ENCODE measurements at regions of chr7 and their contacts with region 1.

Region 1: DNA sequence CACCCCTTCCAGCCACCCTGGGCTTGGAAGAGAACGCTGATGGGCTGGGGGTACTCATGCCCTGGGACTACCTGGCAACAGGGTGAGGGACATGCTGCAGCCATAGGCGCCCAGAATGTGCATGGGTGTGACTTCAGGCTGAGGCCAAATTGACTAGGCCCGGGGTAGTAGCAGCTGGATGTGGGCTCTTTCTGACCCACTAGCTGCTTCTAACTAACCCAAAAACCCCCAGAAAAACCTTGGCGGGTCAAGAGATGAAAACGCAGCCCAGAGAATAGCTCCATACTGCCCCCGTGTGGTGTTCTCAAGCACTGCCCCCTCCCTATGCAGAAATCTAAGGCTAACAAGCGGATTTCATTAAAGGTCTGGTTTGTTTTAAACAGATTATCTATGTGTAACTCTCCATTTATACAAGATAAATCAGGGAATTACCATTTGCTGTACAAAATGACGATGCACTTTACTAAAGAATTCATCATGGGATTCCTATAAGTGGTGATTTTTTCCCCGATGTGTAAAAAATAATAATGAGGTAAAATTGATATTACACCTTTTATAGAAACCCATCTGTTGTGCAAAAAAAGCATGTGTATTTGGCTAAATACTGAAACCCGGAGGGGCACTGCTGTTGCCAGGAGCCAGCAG is 4.2 kb downstream of the SMARCD3 start:
- DNase-seq: peak; percentile 57
- H3K4me3 ChIP-seq: no peak overlapping the region
- H3K27ac ChIP-seq: no peak overlapping the region
- H3K4me1 ChIP-seq: peaks cover 8% of the 10 kb centered on the region
- H3K27me3 ChIP-seq: peaks cover 32% of the 10 kb centered on the region
- CTCF ChIP-seq: peak; percentile 88

Region 2: DNA sequence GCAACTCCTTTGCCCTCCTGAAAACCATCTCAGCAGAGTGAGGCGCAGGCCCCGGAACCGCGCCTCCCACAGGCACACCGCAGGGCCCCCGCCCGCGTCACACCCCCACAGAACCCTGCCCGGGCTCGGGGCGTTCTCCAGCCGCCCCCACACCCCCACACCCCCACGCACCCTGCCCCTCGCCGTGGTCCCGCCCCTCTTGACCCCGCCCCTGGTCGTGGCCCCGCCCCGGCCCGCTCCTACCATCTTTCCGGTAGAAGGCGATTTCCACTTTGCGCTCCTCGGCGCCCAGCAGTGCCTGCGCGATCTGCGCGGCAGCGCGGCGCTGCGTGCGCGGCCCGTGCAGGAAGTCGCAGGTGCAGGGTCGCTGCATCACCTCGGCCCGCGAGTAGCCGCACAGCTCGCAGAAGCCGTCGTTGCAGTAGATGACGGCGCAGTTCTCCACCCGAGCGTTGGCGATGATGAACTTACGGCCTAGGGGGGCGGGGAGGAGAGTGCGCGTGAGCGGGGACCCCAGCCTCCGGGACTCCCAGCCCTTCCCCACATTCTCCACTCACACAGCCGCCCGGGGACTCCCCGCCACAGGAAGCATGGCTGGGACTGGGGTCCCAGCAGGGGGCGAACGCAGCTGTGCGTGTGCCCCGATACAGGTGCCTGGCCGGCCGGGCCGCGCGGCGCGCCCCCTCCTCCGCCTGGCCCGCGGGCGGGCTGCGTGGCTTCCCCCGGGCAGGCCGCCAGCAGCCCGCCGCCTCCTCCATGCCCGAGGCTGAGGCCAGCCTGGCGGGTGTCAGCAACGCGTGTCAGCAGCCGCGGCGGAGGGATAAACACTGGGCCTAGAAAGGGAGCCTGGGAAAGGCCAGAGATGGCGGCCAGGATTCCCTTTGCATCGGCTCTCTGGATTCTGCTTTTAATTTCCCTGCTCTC is 269.6 kb before region 1 on chr7:
- intact Hi-C with region 1: no loop called
- DNase-seq: peak; percentile 87
- H3K4me3 ChIP-seq: peak overlapping the region; percentile 42
- H3K27ac ChIP-seq: peak overlapping the region; percentile 62
- H3K4me1 ChIP-seq: no peaks in the 10 kb centered on the region
- H3K27me3 ChIP-seq: peaks cover 18% of the 10 kb centered on the region
- CTCF ChIP-seq: no peak

Region 3: DNA sequence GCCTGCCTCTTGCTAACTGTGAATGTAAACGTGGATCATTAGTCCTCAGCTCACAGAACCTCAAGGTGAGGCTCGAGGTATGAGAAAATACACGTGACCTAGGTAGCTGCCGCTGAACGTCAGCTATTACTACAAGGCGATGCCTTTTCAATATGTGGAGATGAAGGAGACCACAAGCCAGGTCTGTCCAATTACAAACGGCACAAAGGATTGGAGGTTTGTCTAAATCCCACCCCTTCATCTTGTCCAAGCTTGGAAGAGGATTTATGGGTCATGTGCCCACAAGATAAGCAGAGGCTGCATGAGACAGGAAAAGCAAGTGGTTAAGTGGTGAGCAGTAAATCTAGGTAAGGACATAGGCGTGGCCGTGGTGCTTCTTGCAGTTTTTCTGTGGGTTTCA is 37.4 kb before region 1 on chr7:
- intact Hi-C with region 1: no loop called
- DNase-seq: no peak
- H3K4me3 ChIP-seq: no peak overlapping the region
- H3K27ac ChIP-seq: no peak overlapping the region
- H3K4me1 ChIP-seq: no peaks in the 10 kb centered on the region
- H3K27me3 ChIP-seq: no peaks in the 10 kb centered on the region
- CTCF ChIP-seq: no peak

Region 4: DNA sequence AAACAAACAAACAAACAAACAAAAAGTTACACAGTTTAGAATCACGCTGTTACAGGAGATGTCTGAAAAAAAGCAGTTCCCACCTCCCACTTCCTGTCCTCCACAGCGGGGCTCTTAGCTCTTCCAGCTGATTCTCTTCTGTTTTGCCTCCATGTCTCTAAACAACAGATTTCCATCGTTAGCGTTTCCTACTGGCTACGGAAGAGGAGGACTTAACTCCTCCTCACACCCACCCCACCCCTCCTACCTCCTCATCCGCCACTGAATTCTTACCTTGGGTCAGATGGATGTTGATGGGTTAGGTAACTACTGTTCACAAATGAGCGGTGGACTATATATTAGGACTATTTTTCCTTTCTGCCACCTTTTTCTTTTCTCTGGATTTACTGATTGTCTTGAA is 60.5 kb after region 1 on chr7:
- intact Hi-C with region 1: loop called (anchors 5 kb)
- DNase-seq: no peak
- H3K4me3 ChIP-seq: no peak overlapping the region
- H3K27ac ChIP-seq: no peak overlapping the region
- H3K4me1 ChIP-seq: peaks cover 7% of the 10 kb centered on the region
- H3K27me3 ChIP-seq: peaks cover 6% of the 10 kb centered on the region
- CTCF ChIP-seq: no peak